Mammary epithelial cell (primary cell): ENCODE measurements at regions of chr10 and their contacts with region 1.

Region 1: GRCh38 chr10:96229568-96230030 is 41.8 kb downstream of the BLNK start:
- DNase-seq: peak; percentile 66
- H3K4me3 ChIP-seq: no peak overlapping the region
- H3K27ac ChIP-seq: no peak overlapping the region
- H3K4me1 ChIP-seq: no peaks in the 10 kb centered on the region
- H3K27me3 ChIP-seq: no peaks in the 10 kb centered on the region
- CTCF ChIP-seq: peak; percentile 95 to 97

Region 2: GRCh38 chr10:95987685-95988426 is 241.7 kb before region 1 on chr10:
- CTCF ChIA-PET with region 1: no interaction called
- dilution Hi-C with region 1: no loop called
- in situ Hi-C with region 1: no loop called
- intact Hi-C with region 1: no loop called
- DNase-seq: no peak
- H3K4me3 ChIP-seq: no peak overlapping the region
- H3K27ac ChIP-seq: no peak overlapping the region
- H3K4me1 ChIP-seq: no peaks in the 10 kb centered on the region
- H3K27me3 ChIP-seq: no peaks in the 10 kb centered on the region
- CTCF ChIP-seq: no peak

Region 3: DNA sequence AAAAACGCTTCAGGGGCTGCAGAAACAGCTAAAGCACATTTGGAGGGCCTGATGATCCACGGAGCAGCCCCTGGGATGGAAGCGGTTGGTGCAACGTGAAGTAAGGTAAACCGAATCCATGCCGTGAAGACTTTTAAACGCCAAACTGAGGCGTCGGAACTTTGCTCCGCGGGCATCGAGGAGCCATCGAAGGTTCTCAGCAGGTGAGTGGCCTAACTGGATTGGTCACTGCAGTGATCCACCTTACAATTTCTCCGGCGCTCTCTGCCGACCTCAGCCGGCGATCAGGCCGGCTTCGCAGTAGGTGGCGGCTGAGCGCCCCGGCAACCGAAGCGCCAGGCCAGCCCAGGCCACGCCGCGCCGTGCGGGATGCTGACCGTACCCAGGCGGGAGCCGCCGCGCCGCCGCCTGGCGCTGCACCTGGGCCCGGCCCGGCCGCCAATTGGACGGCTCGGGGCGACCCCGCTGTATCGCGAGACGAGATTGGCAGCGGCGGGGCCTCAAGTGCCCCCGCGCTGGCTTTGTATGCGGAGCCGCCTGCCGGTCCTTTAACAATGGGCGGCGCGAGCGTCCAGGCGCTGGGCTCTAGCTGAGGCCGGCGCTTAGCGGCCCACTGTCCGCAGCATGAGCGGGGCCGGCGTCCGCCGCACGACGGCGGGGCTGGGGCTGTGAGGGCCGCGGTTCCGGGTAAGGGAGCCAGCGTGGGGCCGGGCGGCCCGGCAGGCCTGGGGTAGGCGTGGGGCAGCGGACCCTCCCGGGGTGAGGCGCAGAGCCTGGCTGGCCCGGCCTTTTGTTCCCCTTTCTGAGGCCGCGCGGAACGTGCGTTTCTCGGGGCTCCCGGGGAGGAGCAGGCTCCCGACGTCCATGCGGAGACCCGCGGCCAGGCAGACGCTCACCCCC is 186.3 kb before region 1 on chr10 and contains the start of gene CCNJ:
- CTCF ChIA-PET with region 1: no interaction called
- dilution Hi-C with region 1: no loop called
- in situ Hi-C with region 1: loop called in 1 of 2 experiments (anchors 10 kb)
- intact Hi-C with region 1: loop called (anchors 10 kb)
- DNase-seq: peak; percentile 87
- H3K4me3 ChIP-seq: peak within 1 kb of the TSS; percentile 77 to 94 (median 83)
- H3K27ac ChIP-seq: peak within 1 kb of the TSS; percentile 70
- H3K4me1 ChIP-seq: peaks cover 12% of the 10 kb centered on the region
- H3K27me3 ChIP-seq: no peaks in the 10 kb centered on the region
- CTCF ChIP-seq: no peak
- total RNA-seq, gene CCNJ: 6.9 to 7.5 TPM

Region 4: GRCh38 chr10:96255549-96256331 is 26.1 kb after region 1 on chr10:
- CTCF ChIA-PET with region 1: no interaction called
- dilution Hi-C with region 1: no loop called
- in situ Hi-C with region 1: no loop called
- intact Hi-C with region 1: no loop called
- DNase-seq: no peak
- H3K4me3 ChIP-seq: no peak overlapping the region
- H3K27ac ChIP-seq: no peak overlapping the region
- H3K4me1 ChIP-seq: peaks cover 4% of the 10 kb centered on the region
- H3K27me3 ChIP-seq: no peaks in the 10 kb centered on the region
- CTCF ChIP-seq: no peak

Region 5: DNA sequence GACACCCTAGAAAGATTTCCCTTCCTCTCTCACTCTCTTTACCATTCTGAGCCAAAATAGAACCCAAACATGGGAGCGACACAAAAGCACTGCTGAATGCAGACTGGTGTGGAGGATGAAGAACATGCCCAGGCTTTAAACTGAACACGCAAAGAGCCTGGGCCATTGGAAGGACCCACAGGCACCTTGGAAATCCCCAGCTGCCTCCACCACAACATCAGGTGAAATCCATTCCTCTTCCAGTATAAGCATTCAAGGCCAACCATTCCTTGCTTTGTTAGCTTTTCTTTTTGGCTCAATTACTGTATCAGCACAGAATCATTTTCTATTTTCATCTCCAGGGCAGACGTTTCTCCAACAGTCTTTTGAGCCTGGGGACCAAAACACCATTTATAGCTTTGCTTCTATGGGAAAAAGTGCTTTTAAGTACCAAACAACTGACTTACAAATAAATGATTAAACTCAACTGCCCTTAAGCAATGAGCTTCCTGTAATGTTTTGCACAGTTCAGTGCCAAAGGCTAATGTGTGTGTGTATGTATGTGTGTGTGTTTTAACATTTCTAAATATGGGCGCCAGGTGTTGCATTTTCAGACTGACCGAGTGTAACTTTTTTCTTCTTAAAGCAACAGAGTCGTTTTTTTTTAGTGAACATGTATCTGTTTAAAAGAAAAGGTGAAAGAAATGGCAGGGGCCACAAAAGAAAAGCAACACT is 58.0 kb after region 1 on chr10:
- CTCF ChIA-PET with region 1: interaction called, 27 read pairs
- dilution Hi-C with region 1: no loop called
- in situ Hi-C with region 1: no loop called
- intact Hi-C with region 1: no loop called
- DNase-seq: peak; percentile 53
- H3K4me3 ChIP-seq: no peak overlapping the region
- H3K27ac ChIP-seq: no peak overlapping the region
- H3K4me1 ChIP-seq: peaks cover 21% of the 10 kb centered on the region
- H3K27me3 ChIP-seq: no peaks in the 10 kb centered on the region
- CTCF ChIP-seq: no peak

Region 6: GRCh38 chr10:96299383-96299782 is 69.8 kb after region 1 on chr10:
- CTCF ChIA-PET with region 1: interaction called, 7 read pairs
- dilution Hi-C with region 1: no loop called
- in situ Hi-C with region 1: loop called (anchors 5 kb)
- intact Hi-C with region 1: no loop called
- DNase-seq: no peak
- H3K4me3 ChIP-seq: no peak overlapping the region
- H3K27ac ChIP-seq: no peak overlapping the region
- H3K4me1 ChIP-seq: no peaks in the 10 kb centered on the region
- H3K27me3 ChIP-seq: no peaks in the 10 kb centered on the region
- CTCF ChIP-seq: no peak